Motor neuron (in vitro differentiated cells): ENCODE measurements at regions of chr1 and their contacts with region 1.

Region 1: DNA sequence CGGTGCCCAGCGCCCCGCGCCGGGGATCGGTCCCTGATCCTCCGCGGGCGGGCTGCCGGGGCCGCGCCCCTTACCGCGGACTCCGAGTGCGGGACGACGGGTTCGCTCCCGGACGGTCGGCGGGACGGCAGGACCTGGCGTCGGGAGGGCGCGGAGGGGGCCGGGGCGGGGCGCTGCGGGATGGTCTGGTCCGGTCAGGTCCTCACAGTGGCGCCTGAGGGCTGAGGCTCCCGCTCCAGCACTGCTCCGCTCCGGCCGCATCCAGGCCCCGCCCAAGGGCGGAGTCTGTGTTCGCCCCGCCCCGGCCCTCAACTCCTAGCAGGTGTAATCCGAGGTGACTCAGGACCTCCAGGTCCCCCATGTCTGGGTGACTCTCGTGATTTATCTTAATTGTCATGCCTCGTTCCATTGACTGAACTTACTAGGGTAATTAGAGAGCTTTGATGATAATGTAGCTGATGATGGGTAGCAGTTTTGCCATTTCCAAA is at the start of gene RAB3B:
- ATAC-seq: peak; percentile 95 to 99 (median 99)
- H3K4me3 ChIP-seq: peak within 1 kb of the TSS; percentile 51 to 88 (median 68)
- H3K27ac ChIP-seq: peak within 1 kb of the TSS in 1 of 2 donors; percentile 21
- H3K4me1 ChIP-seq: peaks cover 6 to 7% of the 10 kb centered on the region in 2 donors
- total RNA-seq, gene RAB3B: 0.10 to 36.5 (median 15.9) TPM

Region 2: GRCh38 chr1:51750218-51750617 is 240.3 kb before region 1 on chr1:
- in situ Hi-C with region 1: no loop called
- ATAC-seq: peak in 2 of 8 experiments; percentile 46 to 49
- H3K4me3 ChIP-seq: no peak overlapping the region
- H3K27ac ChIP-seq: no peak overlapping the region
- H3K4me1 ChIP-seq: no peaks in the 10 kb centered on the region

Region 3: DNA sequence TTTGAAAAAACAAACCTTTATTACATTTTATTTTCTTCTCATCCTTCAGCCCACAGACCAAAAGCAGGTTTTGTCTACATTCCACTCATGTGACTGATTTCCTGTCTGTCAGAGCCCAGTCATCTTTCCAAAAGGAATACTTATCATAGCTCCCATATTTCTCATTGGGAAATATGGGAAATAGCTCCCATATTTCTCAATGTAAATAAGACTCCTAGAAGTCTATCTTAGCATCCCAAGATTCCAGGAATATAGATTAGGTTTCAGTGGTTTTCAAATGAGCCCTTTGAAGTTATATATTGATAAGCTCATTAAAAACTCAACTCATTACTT is 92.9 kb before region 1 on chr1:
- in situ Hi-C with region 1: loop called in 4 of 9 experiments (anchors 10 kb)
- ATAC-seq: no peak
- H3K4me3 ChIP-seq: no peak overlapping the region
- H3K27ac ChIP-seq: no peak overlapping the region
- H3K4me1 ChIP-seq: peaks cover 10 to 13% of the 10 kb centered on the region in 2 donors

Region 4: DNA sequence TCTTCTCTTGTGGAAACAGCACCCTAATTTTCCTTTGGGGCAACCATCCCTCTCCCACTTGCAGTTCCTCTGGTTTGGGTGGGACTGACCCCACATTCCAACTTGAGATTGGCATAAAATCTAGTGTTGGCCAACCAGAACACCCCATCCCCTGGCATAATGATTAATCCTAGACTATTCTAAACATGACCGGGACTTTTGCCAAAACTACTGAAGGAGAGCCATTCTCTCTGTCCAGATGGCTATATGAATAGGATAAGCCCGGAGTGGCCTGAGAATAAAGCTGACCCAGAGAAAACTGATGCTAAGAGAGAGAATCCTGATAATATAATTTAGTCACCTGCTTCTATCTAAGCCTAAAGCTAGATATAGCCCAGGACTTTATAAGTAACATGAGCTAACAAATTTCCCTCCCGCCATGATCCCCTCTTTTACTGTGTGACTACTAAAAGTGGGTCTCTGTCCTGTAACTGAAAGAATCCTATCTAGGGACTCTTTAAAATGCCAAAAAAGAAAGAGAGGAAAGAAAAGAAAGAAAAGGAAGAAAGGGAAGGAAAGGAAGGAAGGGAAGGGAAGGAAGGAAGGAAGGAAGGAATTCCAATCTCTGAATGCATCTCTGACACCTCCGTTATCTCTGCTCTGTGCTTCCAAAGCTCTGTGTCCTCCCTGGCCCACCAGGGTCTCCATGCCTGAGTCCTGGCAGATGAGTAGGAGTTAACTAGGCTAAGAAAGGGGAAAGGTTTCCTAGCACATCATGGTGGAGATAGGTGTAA is 84.0 kb before region 1 on chr1:
- in situ Hi-C with region 1: loop called in 3 of 9 experiments (anchors 10 kb)
- ATAC-seq: peak in 3 of 8 experiments; percentile 41 to 71 (median 58)
- H3K4me3 ChIP-seq: no peak overlapping the region
- H3K27ac ChIP-seq: no peak overlapping the region
- H3K4me1 ChIP-seq: peaks cover 5 to 6% of the 10 kb centered on the region in 2 donors